Motor neuron (in vitro differentiated cells): ENCODE measurements at regions of chr7 and their contacts with region 1.

Region 1: DNA sequence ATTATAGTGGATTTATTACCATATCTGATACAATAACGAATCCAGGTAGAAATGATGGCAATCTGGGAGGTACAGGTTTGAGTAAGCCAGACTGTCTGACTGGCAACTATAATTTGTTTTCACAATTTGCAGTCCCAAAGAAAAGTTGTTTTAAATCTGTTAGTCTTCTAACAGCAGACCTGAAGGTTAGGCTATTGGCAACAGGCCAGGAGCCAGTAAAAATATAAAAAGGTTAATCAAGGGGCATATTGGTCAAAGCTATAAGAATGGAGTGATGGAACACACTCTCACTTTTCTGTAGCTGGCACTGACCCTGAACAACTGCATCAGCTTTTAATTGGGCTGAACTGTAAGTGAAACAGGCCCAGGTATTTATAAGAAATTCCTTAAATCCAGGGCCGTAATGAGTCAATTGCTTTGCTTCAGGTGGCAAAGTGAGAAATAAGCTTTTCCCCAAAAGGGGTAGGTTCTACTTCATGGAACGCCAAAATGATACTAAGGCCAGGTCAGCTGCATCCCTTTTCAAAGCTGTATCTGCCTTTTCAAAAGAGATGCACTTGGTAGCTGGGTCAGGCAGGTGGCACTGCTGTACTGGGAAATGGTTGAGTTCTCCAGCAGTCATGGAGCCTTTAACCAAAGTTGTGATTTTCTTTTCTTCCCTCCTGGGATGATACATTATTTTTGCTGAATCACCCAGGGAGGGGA is 7.0 kb upstream of the GPR22 start:
- ATAC-seq: peak; percentile 48 to 97 (median 70)
- H3K4me3 ChIP-seq: no peak overlapping the region
- H3K27ac ChIP-seq: no peak overlapping the region
- H3K4me1 ChIP-seq: peaks cover 0 to 8% of the 10 kb centered on the region in 2 donors

Region 2: GRCh38 chr7:107579885-107580715 is 117.2 kb after region 1 on chr7 and contains the start of gene BCAP29:
- in situ Hi-C with region 1: no loop called
- ATAC-seq: peak; percentile 92 to 96 (median 94)
- H3K4me3 ChIP-seq: peak within 1 kb of the TSS; percentile 76 to 98 (median 95)
- H3K27ac ChIP-seq: peak within 1 kb of the TSS; percentile 66 to 89
- H3K4me1 ChIP-seq: peaks cover 4 to 5% of the 10 kb centered on the region in 2 donors
- total RNA-seq, gene BCAP29: 16.5 to 54.0 (median 28.9) TPM

Region 3: GRCh38 chr7:107668296-107668695 is 205.4 kb after region 1 on chr7:
- in situ Hi-C with region 1: no loop called
- ATAC-seq: no peak
- H3K4me3 ChIP-seq: no peak overlapping the region
- H3K27ac ChIP-seq: no peak overlapping the region
- H3K4me1 ChIP-seq: no peaks in the 10 kb centered on the region

Region 4: DNA sequence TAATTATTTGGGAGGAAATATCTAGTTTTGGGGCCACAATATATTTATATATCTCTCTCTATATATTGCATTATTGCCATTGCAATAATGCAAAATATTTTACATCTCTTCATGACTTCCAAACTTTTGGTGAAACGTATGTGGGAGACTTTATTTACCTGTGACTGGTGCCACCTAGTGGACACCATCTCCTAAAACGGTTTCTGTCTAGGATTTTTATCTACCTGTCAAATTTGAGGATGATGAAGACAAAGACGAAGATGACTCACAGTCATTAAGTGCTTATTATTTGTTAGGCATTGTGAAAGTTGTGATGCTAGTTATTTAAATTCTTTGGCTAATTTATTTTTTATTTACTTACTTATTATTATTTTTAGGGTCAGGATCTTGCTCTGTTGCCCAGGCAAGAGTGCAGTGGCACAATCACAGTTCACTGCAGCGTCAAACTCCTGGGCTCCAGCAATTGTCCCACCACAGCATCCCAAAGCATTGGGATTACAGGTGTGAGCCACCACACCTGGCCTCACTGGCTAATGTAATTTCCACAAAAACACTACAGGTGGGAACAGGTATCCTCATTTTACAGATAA is 262.4 kb after region 1 on chr7:
- in situ Hi-C with region 1: loop called in 4 of 9 experiments (anchors 10 to 25 kb)
- ATAC-seq: peak in 1 of 8 experiments; percentile 43
- H3K4me3 ChIP-seq: no peak overlapping the region
- H3K27ac ChIP-seq: no peak overlapping the region
- H3K4me1 ChIP-seq: no peaks in the 10 kb centered on the region

Region 5: DNA sequence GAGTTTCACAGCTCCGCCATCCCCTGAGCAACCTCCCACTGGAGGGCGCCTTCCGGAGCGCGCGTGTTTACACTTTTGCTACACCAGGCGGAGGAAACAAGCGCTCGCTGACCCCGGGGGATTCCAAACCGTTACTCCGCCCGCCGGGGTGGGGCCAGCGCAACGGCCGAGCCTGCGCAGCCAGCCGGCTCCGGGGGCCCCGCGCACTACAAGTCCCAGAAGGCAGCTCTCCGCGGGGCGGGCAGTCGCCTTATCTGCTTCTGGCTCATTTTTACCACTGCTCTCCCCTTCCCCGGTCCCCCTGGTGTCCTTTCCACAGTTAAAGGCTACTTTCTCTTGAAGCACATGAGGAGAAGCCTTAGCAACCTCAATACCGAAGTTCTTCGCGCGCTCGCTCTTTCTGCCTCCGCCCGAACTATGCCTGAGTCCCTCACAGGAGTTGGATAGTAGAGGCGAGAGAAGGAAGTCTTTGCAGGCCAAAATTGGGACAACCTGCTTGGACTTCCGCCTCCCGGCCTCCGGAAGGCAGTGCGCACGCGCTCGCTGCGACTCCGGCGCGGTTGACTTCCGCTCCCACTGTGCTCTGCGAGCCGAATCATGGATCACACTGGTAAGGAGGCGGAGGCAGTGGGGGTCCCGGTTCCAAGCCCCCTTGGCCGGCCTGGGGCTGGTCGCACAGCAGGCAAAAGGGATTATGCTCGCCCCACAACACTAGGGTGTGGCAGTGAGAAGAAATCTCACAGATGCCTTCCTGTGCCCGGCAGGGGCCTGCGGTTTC is 280.9 kb after region 1 on chr7 and contains the start of gene CBLL1:
- in situ Hi-C with region 1: loop called in 2 of 9 experiments (anchors 25 kb)
- ATAC-seq: peak; percentile 86 to 96 (median 96)
- H3K4me3 ChIP-seq: peak within 1 kb of the TSS; percentile 77 to 85 (median 80)
- H3K27ac ChIP-seq: peak within 1 kb of the TSS; percentile 91 to 96
- H3K4me1 ChIP-seq: peaks cover 9 to 18% of the 10 kb centered on the region in 2 donors
- total RNA-seq, gene CBLL1: 18.3 to 27.6 (median 24.5) TPM

Region 6: DNA sequence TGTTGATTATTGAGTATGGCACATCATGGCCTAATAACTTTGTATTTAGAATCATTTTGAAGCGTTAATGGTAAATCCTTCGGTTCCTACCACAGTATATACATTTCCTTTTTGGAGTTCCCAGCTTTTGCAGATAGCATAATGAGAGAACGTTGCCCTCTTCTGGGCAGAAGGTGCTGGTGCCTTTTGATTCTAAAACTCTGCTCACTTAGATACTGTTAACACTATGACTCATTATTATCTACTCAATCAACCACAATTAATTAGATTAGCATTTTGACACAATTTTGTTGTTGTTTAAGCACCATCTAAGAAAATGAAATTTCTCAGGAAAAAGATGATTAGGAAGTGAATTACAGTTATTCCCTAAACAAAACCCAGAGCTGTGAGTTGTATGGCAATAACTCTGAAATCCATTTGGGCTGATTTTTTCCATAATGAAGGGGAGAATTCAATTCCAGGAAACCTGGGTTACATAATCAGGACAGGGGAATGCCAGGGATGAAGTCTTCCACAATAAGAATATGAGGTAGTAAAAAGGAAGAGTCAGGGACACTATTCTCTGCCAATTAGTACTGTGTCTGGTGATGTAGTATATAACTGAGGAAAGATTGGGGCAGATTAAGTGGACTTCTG is 416.6 kb after region 1 on chr7:
- in situ Hi-C with region 1: loop called in 2 of 9 experiments (anchors 25 kb)
- ATAC-seq: peak; percentile 61 to 86 (median 78)
- H3K4me3 ChIP-seq: no peak overlapping the region
- H3K27ac ChIP-seq: no peak overlapping the region
- H3K4me1 ChIP-seq: no peaks in the 10 kb centered on the region

Region 7: DNA sequence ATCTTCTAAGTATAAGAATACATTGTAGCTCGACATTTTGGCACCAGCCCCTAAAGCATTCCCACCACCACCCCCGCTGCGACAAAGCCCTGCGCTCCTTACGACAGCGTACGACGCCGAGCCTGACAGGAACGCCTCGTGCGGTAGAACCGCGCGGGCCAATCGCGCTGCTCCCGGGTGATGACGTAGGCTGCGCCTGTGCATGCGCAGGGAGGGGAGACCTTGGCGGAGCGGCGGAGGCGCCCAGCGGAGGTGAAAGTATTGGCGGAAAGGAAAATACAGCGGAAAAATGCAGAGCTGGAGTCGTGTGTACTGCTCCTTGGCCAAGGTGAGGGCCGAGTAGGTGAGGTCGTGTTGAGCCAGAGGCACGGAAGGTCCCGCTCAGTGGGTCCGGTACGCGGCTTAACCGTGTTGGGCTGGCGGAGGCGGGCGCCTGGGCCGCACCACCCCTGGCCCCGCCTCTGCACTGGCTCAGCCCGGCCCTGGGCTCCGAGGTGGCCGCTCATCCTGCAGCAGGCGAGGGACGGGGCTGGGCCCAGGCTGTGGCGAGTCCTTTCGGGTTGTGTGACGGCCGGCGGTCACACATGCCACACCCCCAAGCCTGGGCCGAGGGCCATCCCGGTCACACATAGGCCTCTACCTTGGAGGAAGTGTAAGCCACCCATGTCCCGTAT is 428.2 kb after region 1 on chr7 and contains the start of gene DLD:
- in situ Hi-C with region 1: loop called in 1 of 9 experiments (anchors 25 kb)
- ATAC-seq: peak; percentile 94 to 100 (median 99)
- H3K4me3 ChIP-seq: peak within 1 kb of the TSS; percentile 78 to 97 (median 85)
- H3K27ac ChIP-seq: peak within 1 kb of the TSS; percentile 81 to 84
- H3K4me1 ChIP-seq: peaks cover 7 to 25% of the 10 kb centered on the region in 2 donors
- total RNA-seq, gene DLD: 43.2 to 115 (median 71.6) TPM